ENCODE measurements at regions of chr13 and their contacts with region 1.

Region 1: GRCh38 chr13:51645154-51645650 is 60.9 kb downstream of the WDFY2 start:
- DNase-seq: peak in 30 of 35 experiments; percentile 9 to 73 (median 39)
- ATAC-seq: peak; percentile 59 to 93 (median 74)
- H3K4me3 ChIP-seq: no peak overlapping the region
- H3K4me3 Mint-ChIP-seq: peak overlapping the region; percentile 45 to 71 (median 71)
- H3K27ac ChIP-seq: peak overlapping the region; percentile 96
- H3K27ac Mint-ChIP-seq: peak overlapping the region; percentile 93
- H3K4me1 ChIP-seq: peaks cover 30 to 42% of the 10 kb centered on the region in 2 experiments
- H3K4me1 Mint-ChIP-seq: peaks cover 42 to 59% (median 53%) of the 10 kb centered on the region in 3 donors
- H3K27me3 ChIP-seq: no peaks in the 10 kb centered on the region
- H3K27me3 Mint-ChIP-seq: no peaks in the 10 kb centered on the region

Region 2: GRCh38 chr13:51542346-51543242 is 102.6 kb before region 1 on chr13:
- CTCF ChIA-PET with region 1: no interaction called
- POLR2A ChIA-PET with region 1: interaction called, 4 to 14 read pairs
- DNase-seq: no peak
- ATAC-seq: no peak
- H3K4me3 ChIP-seq: no peak overlapping the region
- H3K4me3 Mint-ChIP-seq: no peak overlapping the region
- H3K27ac ChIP-seq: no peak overlapping the region
- H3K27ac Mint-ChIP-seq: no peak overlapping the region
- H3K4me1 ChIP-seq: no peaks in the 10 kb centered on the region
- H3K4me1 Mint-ChIP-seq: no peaks in the 10 kb centered on the region
- H3K27me3 ChIP-seq: peaks cover 0 to 2% of the 10 kb centered on the region in 2 experiments
- H3K27me3 Mint-ChIP-seq: peaks cover 0 to 3% of the 10 kb centered on the region in 2 donors

Region 3: GRCh38 chr13:51614350-51614786 is 30.8 kb before region 1 on chr13:
- CTCF ChIA-PET with region 1: interaction called in 1 of 2 experiments, 3 read pairs
- POLR2A ChIA-PET with region 1: interaction called, 3 to 16 read pairs
- DNase-seq: peak in 34 of 35 experiments; percentile 12 to 70 (median 35)
- ATAC-seq: peak; percentile 90 to 98 (median 98)
- H3K4me3 ChIP-seq: peak overlapping the region; percentile 30 to 34
- H3K4me3 Mint-ChIP-seq: peak overlapping the region; percentile 76 to 81 (median 77)
- H3K27ac ChIP-seq: peak overlapping the region; percentile 81
- H3K27ac Mint-ChIP-seq: peak overlapping the region; percentile 95
- H3K4me1 ChIP-seq: peaks cover 5 to 7% of the 10 kb centered on the region in 2 experiments
- H3K4me1 Mint-ChIP-seq: peaks cover 20 to 30% (median 27%) of the 10 kb centered on the region in 3 donors
- H3K27me3 ChIP-seq: no peaks in the 10 kb centered on the region
- H3K27me3 Mint-ChIP-seq: no peaks in the 10 kb centered on the region

Region 4: DNA sequence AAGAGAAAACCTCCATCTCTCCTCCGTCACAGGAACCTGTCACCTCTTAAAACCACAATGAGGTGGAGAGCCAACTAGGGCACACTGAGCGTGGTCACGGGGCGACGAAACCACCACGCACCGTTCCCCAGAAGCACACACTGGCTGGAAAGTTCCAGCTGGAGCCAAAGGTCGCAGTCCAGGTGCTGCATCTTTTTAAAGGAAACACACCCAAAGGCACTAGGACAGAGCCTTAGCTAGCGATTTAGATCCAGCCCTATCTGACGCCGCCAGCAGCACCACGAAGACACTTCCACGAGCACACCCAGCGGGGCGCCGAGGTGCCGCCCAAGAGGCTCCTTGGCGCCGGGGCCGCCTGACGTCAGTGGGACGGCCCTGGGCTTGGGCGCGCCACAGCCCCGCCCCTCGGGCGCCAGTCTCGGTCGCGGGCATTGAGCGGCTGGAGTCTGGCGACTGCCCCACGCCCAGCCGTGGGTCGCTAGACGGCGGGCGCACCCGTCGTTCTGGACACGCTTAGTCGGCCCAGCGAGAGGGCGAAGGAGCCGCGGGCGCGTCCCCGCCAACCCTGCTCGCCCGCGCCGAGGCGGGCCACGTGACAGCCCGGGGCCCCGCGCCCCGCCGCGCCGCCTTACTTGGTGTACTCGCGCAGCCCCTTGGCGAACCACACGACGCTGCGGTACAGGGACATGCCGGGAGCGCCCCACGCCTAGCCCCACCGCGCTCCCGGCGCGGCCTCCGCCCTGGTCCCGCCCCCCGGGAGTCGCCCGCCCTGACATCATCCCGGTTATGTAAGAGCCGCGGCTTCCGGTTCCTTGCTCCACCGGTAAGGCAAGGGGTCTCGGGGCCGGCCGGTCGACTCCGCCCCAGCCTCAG is 158.5 kb after region 1 on chr13 and contains the start of gene DHRS12:
- CTCF ChIA-PET with region 1: interaction called in 1 of 2 experiments, 7 read pairs
- POLR2A ChIA-PET with region 1: interaction called, 3 to 17 read pairs
- DNase-seq: peak; percentile 78 to 94 (median 84)
- ATAC-seq: peak; percentile 76 to 91 (median 86)
- H3K4me3 ChIP-seq: peak within 1 kb of the TSS; percentile 80 to 86
- H3K4me3 Mint-ChIP-seq: peak within 1 kb of the TSS; percentile 88 to 94 (median 91)
- H3K27ac ChIP-seq: peak within 1 kb of the TSS; percentile 100
- H3K27ac Mint-ChIP-seq: peak within 1 kb of the TSS; percentile 99
- H3K4me1 ChIP-seq: peaks cover 18 to 38% of the 10 kb centered on the region in 2 experiments
- H3K4me1 Mint-ChIP-seq: peaks cover 57 to 62% (median 59%) of the 10 kb centered on the region in 3 donors
- H3K27me3 ChIP-seq: no peaks in the 10 kb centered on the region
- H3K27me3 Mint-ChIP-seq: no peaks in the 10 kb centered on the region
- total RNA-seq, gene DHRS12: 18.1 to 27.8 (median 21.7) TPM

Measured in T-cell (primary cell).